Calu3 (cell line): ENCODE measurements at regions of chr9 and their contacts with region 1.

Region 1: DNA sequence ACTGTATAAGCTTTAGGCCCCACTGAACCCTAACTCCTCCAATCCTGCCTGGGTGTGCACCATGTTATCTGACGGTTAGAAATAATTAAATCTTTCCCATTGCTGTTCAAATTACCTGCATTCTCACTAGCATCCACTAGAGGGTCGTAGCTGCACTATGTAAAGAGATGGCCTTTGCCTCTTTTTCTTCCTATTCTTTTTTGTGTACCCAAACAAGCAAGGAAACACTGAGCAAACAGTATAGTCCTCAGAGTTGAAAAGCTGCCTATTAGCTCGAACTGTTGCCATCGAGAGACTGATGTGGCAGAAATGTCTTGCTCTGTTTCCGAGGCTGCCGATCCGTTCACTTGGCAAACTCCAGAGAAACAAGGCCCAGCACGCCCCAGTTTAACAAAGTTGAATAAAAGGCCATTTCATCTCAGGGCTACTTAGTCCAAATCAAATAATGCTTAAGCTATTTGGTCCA is 163.8 kb upstream of the TRPM3 start:
- DNase-seq: peak; percentile 31
- H3K4me3 Mint-ChIP-seq: no peak overlapping the region
- H3K27ac Mint-ChIP-seq: no peak overlapping the region
- H3K4me1 Mint-ChIP-seq: no peaks in the 10 kb centered on the region
- H3K27me3 Mint-ChIP-seq: peaks cover 36% of the 10 kb centered on the region
- CTCF ChIP-seq: no peak

Region 2: GRCh38 chr9:71157731-71158130 is 127.5 kb before region 1 on chr9:
- CTCF ChIA-PET with region 1: no interaction called
- intact Hi-C with region 1: no loop called
- DNase-seq: no peak
- H3K4me3 Mint-ChIP-seq: no peak overlapping the region
- H3K27ac Mint-ChIP-seq: no peak overlapping the region
- H3K4me1 Mint-ChIP-seq: no peaks in the 10 kb centered on the region
- H3K27me3 Mint-ChIP-seq: peaks cover 30% of the 10 kb centered on the region
- CTCF ChIP-seq: no peak

Region 3: DNA sequence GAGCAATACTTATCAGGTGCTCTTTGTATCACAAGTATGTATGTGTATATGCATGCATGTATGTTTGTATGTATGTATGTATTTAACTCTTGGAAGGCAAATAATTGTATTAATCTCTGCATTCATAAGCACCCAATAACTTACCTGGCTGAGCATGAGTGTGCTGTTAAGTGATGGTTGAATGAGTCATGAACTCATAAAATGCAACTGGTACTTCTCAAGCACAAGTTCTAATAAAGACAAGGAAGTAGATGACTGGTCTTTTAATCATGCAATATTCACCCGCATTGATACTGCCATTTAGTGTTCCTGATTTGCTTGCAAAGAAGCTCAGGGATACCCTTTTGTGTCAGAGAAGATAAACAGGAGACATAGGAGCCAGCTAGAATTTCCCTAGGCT is 41.1 kb after region 1 on chr9:
- CTCF ChIA-PET with region 1: no interaction called
- intact Hi-C with region 1: loop called (anchors 5 kb)
- DNase-seq: no peak
- H3K4me3 Mint-ChIP-seq: no peak overlapping the region
- H3K27ac Mint-ChIP-seq: no peak overlapping the region
- H3K4me1 Mint-ChIP-seq: no peaks in the 10 kb centered on the region
- H3K27me3 Mint-ChIP-seq: peaks cover 54% of the 10 kb centered on the region
- CTCF ChIP-seq: no peak

Region 4: DNA sequence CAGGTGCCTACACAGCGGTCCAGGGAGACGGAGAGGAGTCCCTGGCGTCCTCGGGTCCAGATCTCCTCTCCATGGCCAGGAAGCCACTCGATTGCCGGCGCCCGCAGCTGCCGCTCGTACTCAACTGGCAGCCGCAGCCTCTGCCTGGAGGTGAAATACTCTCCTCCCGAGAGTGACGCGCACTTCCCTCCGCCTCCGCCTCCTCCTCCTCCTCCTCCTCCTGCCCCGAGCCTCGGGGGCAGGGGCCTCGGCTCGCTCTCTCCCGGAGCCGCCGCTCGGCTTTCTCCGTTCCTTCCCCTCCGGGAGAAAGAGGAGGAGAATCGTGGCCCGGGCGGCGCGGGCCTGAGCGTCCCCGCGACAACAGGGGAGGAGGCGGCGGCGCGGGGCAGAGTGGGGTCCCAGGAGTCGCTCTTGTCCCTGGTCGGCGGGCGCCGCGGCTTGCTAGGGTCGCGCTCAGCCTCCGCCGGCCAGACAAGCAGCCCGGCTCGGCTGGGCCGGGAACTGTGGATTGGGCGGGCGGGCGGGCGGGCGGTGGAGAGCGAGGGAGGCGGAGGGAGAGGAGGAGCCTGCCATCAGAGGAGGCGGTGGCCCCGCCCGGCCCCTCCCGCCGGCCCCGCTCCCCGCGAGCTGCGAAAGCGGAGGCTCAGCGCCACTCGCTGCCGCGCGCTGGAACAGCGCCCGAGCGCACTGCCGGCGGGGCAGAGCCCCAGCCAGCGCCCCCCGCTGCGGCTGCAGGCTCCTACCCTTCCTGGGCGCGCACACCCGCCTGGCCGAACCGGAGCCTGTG is 483.4 kb after region 1 on chr9 and contains the start of gene CEMIP2:
- CTCF ChIA-PET with region 1: no interaction called
- intact Hi-C with region 1: loop called (anchors 10 kb)
- DNase-seq: peak; percentile 85
- H3K4me3 Mint-ChIP-seq: peak within 1 kb of the TSS; percentile 97
- H3K27ac Mint-ChIP-seq: peak within 1 kb of the TSS; percentile 94
- H3K4me1 Mint-ChIP-seq: peaks cover 19% of the 10 kb centered on the region
- H3K27me3 Mint-ChIP-seq: no peaks in the 10 kb centered on the region
- CTCF ChIP-seq: no peak
- total RNA-seq, gene CEMIP2: 89.0 and 122 TPM in 2 replicates